Activated CD4-positive, alpha-beta memory T cell treated with anti-CD3 and anti-CD28 coated beads, Interleukin-2, amount 10 ng/mL, durations not matched to agents 7 days and 5 days (primary cell): ENCODE measurements at regions of chr12 and their contacts with region 1.

Region 1: DNA sequence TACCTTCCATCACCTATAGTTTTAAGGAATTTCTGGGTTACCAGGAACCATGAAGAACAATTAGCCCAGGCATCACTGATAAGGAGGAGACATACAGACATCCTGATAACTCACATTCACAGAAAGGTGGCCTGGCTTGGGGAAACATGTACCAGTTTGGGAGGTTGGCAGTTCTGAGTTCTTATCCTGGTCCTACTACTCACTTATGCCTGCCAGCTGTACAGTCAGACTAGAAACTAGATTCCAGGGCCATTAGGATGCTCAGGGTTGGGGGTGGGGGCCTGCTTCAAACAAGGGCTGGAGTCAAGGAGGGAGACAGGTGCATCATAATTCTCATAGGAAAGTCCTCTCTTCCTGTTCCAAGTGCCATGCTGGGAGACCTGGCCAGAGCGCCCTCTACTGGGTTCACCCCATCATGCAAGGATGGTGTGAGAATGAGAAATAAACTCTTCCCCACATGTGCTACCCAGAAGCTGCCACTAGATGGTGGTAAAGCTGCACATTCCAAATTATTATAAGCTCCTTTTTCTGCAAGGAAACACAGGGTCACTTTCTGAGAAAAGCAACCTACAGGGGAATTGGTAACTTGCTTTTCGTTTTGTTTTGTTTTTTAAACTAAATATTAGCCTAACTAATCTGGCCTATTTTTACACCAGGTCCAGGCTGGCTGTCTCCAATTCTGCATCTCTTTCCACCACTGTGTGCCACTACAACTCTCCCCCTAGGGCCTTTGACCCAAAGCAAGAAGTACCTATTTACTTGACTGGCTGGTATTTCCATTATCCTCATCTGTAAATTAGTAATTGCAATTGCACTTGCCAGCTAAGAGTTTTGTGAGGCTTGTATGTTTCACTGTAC is 14.5 kb downstream of the OAS2 start:
- DNase-seq: peak; percentile 77
- H3K4me3 Mint-ChIP-seq: no peak overlapping the region
- H3K27ac Mint-ChIP-seq: peak overlapping the region; percentile 21
- H3K4me1 Mint-ChIP-seq: peaks cover 45% of the 10 kb centered on the region
- H3K27me3 Mint-ChIP-seq: no peaks in the 10 kb centered on the region

Region 2: GRCh38 chr12:112900299-112901145 is 92.2 kb before region 1 on chr12:
- CTCF ChIA-PET with region 1: interaction called, 33 read pairs
- POLR2A ChIA-PET with region 1: interaction called, 4 read pairs
- DNase-seq: peak; percentile 49
- H3K4me3 Mint-ChIP-seq: no peak overlapping the region
- H3K27ac Mint-ChIP-seq: no peak overlapping the region
- H3K4me1 Mint-ChIP-seq: peaks cover 38% of the 10 kb centered on the region
- H3K27me3 Mint-ChIP-seq: peaks cover 25% of the 10 kb centered on the region

Region 3: GRCh38 chr12:112906712-112907414 is 85.9 kb before region 1 on chr12 and contains the start of gene OAS1:
- CTCF ChIA-PET with region 1: interaction called, 21 read pairs
- POLR2A ChIA-PET with region 1: interaction called, 10 read pairs
- DNase-seq: peak; percentile 69
- H3K4me3 Mint-ChIP-seq: peak within 1 kb of the TSS; percentile 100
- H3K27ac Mint-ChIP-seq: peak within 1 kb of the TSS; percentile 99
- H3K4me1 Mint-ChIP-seq: peaks cover 78% of the 10 kb centered on the region
- H3K27me3 Mint-ChIP-seq: no peaks in the 10 kb centered on the region
- total RNA-seq, gene OAS1: 246 to 248 TPM

Region 4: DNA sequence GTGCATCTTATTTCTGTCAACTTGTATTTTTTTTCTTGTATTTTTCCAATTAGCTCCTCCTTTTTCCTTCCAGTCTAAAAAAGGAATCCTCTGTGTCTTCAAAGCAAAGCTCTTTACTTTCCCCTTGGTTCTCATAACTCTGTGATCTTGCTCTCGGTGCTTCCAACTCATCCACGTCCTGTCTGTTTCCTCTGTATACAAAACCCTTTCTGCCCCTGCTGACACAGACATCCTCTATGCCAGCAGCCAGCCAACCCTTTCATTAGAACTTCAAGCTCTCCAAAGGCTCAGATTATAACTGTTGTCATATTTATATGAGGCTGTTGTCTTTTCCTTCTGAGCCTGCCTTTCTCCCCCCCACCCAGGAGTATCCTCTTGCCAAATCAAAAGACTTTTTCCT is 17.9 kb after region 1 on chr12:
- CTCF ChIA-PET with region 1: interaction called, 11 read pairs
- POLR2A ChIA-PET with region 1: no interaction called
- DNase-seq: no peak
- H3K4me3 Mint-ChIP-seq: no peak overlapping the region
- H3K27ac Mint-ChIP-seq: no peak overlapping the region
- H3K4me1 Mint-ChIP-seq: no peaks in the 10 kb centered on the region
- H3K27me3 Mint-ChIP-seq: no peaks in the 10 kb centered on the region

Region 5: DNA sequence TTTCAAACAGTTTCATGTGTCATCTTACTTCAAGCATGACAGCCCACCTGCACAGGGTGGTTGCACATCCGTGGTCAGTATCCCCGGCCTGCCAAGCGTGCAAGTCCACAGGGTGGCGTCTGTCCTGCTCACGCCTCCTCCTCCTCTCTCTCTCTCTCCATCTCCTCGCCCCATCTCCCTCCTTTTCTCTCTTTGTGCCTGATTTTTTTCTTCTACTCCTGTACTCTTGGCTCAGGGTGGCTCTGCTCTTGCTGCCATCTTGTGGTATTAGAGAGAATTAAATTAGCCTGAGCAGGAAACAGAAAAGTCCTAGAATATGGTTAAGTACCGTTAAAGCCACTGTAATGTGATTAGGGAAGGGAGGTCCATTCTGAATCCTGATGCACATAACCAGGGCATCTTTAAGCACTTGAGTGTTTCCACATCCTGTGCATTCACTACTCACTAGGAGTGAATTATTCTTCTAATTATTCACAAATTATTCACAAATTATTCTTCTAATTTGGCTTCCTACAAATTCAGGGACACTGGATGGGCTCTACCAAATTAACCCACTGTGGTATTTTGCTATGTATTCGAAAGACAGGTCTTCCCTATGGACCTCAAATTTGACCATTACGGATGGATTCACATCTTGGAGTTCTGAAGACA is 38.2 kb after region 1 on chr12:
- CTCF ChIA-PET with region 1: interaction called, 10 read pairs
- POLR2A ChIA-PET with region 1: no interaction called
- DNase-seq: no peak
- H3K4me3 Mint-ChIP-seq: no peak overlapping the region
- H3K27ac Mint-ChIP-seq: no peak overlapping the region
- H3K4me1 Mint-ChIP-seq: no peaks in the 10 kb centered on the region
- H3K27me3 Mint-ChIP-seq: peaks cover 12% of the 10 kb centered on the region

Region 6: DNA sequence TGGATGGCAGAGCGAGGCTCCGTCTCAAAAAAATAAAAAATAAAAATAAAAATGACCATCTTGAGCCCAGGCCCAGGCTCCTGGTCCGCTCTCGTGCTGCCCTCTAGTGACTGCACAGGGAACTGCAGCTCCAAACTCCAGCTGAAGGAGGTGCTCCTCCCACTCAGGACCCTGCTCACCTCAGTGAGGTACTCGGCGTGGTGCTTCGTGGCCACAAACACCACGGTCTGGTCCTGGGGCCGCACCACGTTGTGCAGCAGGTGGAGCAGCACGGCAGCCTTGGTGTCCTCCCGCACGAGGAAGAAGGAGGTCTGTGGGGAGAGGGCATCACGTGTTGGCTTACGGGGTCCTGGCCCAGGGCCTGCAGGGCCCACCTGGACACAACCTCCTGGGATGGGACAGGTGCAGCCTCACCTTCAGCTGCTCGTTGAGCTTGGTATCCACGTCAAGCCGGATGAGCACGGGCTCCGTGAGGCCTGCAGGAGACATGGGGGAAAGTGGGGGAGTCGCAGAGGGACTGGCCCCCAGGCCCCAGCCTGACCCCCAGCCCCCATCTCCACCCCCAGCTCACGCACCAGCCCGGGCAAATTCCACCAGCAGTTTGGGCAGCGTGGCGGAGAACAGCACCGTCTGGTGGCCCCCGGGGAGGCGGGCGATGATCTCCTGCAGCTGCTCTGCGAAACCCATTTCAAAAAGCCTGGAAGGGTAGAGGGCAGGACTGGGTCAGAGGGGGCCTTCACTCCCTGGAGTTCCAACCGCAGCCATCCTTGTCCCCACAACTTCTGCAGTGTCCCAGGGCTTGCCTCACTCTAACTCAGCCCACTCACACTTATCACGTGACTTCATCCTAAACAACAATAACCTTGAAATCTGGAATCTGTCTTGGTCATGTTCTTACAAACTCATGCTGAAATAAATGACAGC is 182.0 kb after region 1 on chr12:
- CTCF ChIA-PET with region 1: interaction called, 12 read pairs
- POLR2A ChIA-PET with region 1: no interaction called
- DNase-seq: peak; percentile 77
- H3K4me3 Mint-ChIP-seq: no peak overlapping the region
- H3K27ac Mint-ChIP-seq: no peak overlapping the region
- H3K4me1 Mint-ChIP-seq: peaks cover 2% of the 10 kb centered on the region
- H3K27me3 Mint-ChIP-seq: no peaks in the 10 kb centered on the region